ENCODE measurements at regions of chr4 and their contacts with region 1.

Region 1: GRCh38 chr4:1351854-1352633 is 5.0 kb downstream of the UVSSA start:
- DNase-seq: peak; percentile 87
- H3K4me3 ChIP-seq: no peak overlapping the region
- H3K27ac ChIP-seq: no peak overlapping the region
- H3K4me1 ChIP-seq: peaks cover 9% of the 10 kb centered on the region
- H3K27me3 ChIP-seq: no peaks in the 10 kb centered on the region

Region 2: DNA sequence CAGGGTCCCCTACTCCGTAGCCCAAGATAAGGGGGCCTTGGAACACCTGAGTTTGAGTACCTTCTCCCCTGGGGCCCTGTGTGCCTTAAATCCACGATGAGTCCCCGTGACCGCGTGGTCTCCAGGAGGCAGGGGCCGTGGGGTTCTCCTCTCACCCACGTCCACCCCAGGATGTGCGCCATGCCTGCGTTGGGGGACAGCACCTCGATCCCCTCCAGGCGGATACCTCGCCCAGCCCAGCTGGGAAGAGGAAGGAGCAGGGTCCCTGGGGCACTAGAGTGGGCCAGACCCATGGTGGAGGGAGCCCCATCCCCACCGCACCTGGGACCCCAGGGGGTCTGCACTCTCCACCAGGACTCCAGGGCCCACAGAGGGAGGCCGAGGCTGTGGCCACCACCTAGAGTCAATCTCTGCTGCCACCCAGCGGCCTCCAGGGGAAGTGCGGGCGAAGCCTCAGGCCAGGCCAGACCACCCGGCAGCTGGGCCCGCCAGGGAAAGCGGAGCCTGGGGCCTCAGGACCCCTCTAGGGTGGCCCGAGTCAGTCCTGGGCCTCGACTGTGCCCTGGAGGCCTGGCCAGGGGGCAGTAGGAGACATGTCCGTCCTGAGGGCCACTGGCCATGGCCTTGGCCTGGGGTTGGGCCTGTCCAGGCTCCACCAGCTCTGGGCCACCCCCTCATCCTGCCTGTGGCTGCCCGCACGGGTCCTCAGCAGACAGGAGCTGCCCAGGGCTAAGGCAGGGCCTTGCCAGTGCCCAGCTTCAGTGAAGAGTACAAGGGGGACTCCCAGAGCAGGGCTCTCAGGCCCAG is 277.1 kb after region 1 on chr4:
- in situ Hi-C with region 1: loop called (anchors 10 kb)
- DNase-seq: peak; percentile 63
- H3K4me3 ChIP-seq: no peak overlapping the region
- H3K27ac ChIP-seq: no peak overlapping the region
- H3K4me1 ChIP-seq: no peaks in the 10 kb centered on the region
- H3K27me3 ChIP-seq: no peaks in the 10 kb centered on the region

Region 3: GRCh38 chr4:1732911-1733310 is 380.9 kb after region 1 on chr4:
- in situ Hi-C with region 1: no loop called
- DNase-seq: no peak
- H3K4me3 ChIP-seq: no peak overlapping the region
- H3K27ac ChIP-seq: no peak overlapping the region
- H3K4me1 ChIP-seq: no peaks in the 10 kb centered on the region
- H3K27me3 ChIP-seq: no peaks in the 10 kb centered on the region

Measured in GM23248 (cell line).